Endothelial cell of umbilical vein (primary cell): ENCODE measurements at regions of chr15 and their contacts with region 1.

Region 1: GRCh38 chr15:77633134-77633912 is 611 bp upstream of the LINGO1 start:
- DNase-seq: peak; percentile 76
- H3K4me3 ChIP-seq: peak overlapping the region in 2 of 3 experiments; percentile 9 to 37
- H3K27ac ChIP-seq: no peak overlapping the region
- H3K4me1 ChIP-seq: peaks cover 3% of the 10 kb centered on the region
- H3K27me3 ChIP-seq: peaks cover 39 to 45% of the 10 kb centered on the region in 2 experiments
- CTCF ChIP-seq: peak; percentile 100
- POLR2A ChIP-seq: no peak

Region 2: DNA sequence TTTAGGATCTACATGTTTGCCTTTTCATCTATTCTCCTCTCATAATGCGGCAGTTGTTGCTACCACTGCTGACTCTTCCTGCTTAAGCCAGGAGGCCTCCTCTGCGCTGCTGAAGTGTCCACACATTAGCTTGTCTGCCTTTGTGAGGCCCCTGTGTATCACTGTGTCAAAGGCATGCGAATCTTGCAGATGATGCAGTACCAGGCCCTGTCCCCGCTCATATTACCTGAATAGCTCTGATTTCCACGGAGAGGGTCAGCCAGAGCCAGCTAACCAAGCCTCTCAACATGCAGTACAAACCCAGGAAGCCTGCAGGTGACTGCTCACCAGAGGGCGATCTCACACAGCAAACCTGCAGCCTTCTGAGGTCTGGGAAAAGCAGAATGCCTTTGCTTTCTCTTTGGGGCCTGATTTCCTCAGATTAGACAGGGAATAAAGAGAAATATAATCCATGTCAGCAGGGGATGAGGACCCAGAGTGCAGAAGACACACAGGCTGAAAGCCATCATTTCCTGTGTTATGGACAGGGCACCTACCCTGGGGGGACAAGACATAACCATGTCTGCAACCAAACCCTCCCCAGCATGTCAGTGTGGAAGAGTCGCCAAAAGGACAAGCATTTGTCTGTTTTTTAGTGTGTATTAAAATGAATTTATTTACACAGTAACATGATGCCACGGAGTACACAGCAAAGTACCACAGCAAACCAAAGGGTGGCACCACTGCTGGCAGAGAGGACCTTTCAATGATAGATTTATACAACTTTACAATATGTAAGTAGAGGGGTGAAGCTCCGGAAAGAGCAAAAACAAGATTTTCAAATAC is 525.6 kb before region 1 on chr15:
- CTCF ChIA-PET with region 1: interaction called, 8 read pairs
- POLR2A ChIA-PET with region 1: no interaction called
- dilution Hi-C with region 1: no loop called
- intact Hi-C with region 1: loop called (anchors 5 kb)
- DNase-seq: peak; percentile 53
- H3K4me3 ChIP-seq: no peak overlapping the region
- H3K27ac ChIP-seq: no peak overlapping the region
- H3K4me1 ChIP-seq: peaks cover 3% of the 10 kb centered on the region
- H3K27me3 ChIP-seq: no peaks in the 10 kb centered on the region
- CTCF ChIP-seq: peak; percentile 61 to 78
- POLR2A ChIP-seq: no peak

Region 3: GRCh38 chr15:77186594-77187011 is 446.7 kb before region 1 on chr15:
- CTCF ChIA-PET with region 1: interaction called, 15 read pairs
- POLR2A ChIA-PET with region 1: no interaction called
- dilution Hi-C with region 1: no loop called
- intact Hi-C with region 1: loop called (anchors 5 kb)
- DNase-seq: peak; percentile 66
- H3K4me3 ChIP-seq: no peak overlapping the region
- H3K27ac ChIP-seq: peak overlapping the region; percentile 92
- H3K4me1 ChIP-seq: peaks cover 33% of the 10 kb centered on the region
- H3K27me3 ChIP-seq: no peaks in the 10 kb centered on the region
- CTCF ChIP-seq: peak; percentile 30 to 56
- POLR2A ChIP-seq: no peak

Region 4: DNA sequence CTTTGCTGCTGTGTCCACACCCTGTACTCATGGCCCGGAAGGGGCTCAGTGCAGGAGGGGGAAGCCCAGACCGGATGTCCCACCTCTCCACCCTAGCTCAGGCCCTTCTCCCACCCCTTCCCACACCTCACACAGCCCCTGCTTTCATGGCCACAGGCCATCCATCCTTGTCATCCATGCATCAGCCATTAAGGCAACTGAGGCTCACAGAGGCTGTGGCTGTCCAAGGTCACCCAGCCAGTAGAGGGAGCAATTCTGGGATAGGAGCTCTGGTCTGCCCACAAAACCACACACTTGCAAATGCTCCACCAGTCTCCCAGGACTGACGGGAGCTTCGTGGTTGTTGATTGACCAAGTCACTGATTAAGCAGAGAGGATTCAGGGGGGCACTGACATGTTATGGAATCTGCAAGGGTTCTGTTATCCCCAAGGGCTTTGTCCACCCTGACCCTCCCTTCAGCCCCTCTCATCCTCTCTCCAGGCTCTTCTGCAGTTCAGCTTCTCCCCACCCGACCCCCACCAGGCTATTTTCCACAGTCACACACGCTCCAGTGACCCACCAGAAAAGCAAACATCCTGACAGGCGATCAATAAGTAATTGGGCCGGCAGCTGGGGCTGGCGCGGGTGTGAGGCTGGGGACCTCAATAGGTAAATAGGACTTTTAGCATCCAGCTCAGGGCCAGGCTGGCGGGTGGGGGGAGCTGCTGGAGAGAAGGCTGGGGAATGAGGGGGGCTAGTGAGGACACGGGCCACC is 15.7 kb before region 1 on chr15:
- CTCF ChIA-PET with region 1: interaction called, 43 read pairs
- POLR2A ChIA-PET with region 1: no interaction called
- dilution Hi-C with region 1: no loop called
- intact Hi-C with region 1: no loop called
- DNase-seq: no peak
- H3K4me3 ChIP-seq: no peak overlapping the region
- H3K27ac ChIP-seq: no peak overlapping the region
- H3K4me1 ChIP-seq: no peaks in the 10 kb centered on the region
- H3K27me3 ChIP-seq: no peaks in the 10 kb centered on the region
- CTCF ChIP-seq: peak; percentile 42 to 44
- POLR2A ChIP-seq: no peak

Region 5: GRCh38 chr15:77659350-77660321 is 26.3 kb after region 1 on chr15:
- CTCF ChIA-PET with region 1: interaction called, 16 read pairs
- POLR2A ChIA-PET with region 1: no interaction called
- dilution Hi-C with region 1: no loop called
- intact Hi-C with region 1: no loop called
- DNase-seq: peak; percentile 22
- H3K4me3 ChIP-seq: no peak overlapping the region
- H3K27ac ChIP-seq: no peak overlapping the region
- H3K4me1 ChIP-seq: no peaks in the 10 kb centered on the region
- H3K27me3 ChIP-seq: peaks cover 0 to 2% of the 10 kb centered on the region in 2 experiments
- CTCF ChIP-seq: peak; percentile 8 to 57
- POLR2A ChIP-seq: no peak

Region 6: GRCh38 chr15:77810130-77810571 is 176.8 kb after region 1 on chr15:
- CTCF ChIA-PET with region 1: no interaction called
- POLR2A ChIA-PET with region 1: no interaction called
- dilution Hi-C with region 1: no loop called
- intact Hi-C with region 1: no loop called
- DNase-seq: no peak
- H3K4me3 ChIP-seq: no peak overlapping the region
- H3K27ac ChIP-seq: no peak overlapping the region
- H3K4me1 ChIP-seq: no peaks in the 10 kb centered on the region
- H3K27me3 ChIP-seq: no peaks in the 10 kb centered on the region
- CTCF ChIP-seq: no peak
- POLR2A ChIP-seq: no peak

Region 7: DNA sequence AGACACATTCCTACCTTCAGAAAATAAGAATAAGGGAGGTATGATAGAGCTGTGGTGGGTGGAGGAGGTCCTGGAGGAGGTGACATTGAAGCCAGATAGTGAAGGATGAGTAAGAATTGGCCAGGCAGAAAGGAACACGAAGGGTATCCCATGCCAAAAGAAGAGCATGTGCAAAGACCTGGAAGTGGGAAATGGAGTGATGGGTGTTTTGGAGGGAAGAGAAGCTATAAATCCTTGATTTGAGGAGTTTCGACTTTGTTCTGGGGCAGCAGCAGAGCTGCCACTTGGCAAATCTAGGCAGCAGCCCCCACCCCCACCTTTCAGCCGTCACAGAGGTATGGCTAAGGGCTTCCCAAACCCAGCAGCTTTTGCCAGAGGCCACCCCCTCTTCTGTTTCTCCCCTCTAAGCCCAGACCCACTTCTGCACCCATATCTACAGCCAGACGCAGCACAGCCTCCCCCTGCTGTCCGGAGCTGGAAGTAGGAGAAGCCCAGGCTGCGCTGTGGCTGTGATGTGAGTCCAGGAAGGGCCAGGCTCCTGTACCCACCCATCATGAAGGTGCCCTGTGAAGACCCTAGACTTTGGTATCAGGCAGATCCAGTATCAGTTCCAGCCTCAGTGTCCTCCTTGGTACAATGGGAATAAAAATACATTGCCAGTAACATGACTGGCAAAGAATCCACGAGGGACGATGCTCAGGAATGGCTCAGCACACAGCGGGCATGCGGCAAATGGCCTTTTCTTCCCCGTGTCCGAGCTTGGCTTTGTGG is 188.1 kb after region 1 on chr15:
- CTCF ChIA-PET with region 1: interaction called, 116 read pairs
- POLR2A ChIA-PET with region 1: no interaction called
- dilution Hi-C with region 1: no loop called
- intact Hi-C with region 1: loop called (anchors 1 kb)
- DNase-seq: peak; percentile 55
- H3K4me3 ChIP-seq: no peak overlapping the region
- H3K27ac ChIP-seq: no peak overlapping the region
- H3K4me1 ChIP-seq: no peaks in the 10 kb centered on the region
- H3K27me3 ChIP-seq: peaks cover 37 to 42% of the 10 kb centered on the region in 2 experiments
- CTCF ChIP-seq: peak; percentile 59 to 88
- POLR2A ChIP-seq: no peak

Region 8: DNA sequence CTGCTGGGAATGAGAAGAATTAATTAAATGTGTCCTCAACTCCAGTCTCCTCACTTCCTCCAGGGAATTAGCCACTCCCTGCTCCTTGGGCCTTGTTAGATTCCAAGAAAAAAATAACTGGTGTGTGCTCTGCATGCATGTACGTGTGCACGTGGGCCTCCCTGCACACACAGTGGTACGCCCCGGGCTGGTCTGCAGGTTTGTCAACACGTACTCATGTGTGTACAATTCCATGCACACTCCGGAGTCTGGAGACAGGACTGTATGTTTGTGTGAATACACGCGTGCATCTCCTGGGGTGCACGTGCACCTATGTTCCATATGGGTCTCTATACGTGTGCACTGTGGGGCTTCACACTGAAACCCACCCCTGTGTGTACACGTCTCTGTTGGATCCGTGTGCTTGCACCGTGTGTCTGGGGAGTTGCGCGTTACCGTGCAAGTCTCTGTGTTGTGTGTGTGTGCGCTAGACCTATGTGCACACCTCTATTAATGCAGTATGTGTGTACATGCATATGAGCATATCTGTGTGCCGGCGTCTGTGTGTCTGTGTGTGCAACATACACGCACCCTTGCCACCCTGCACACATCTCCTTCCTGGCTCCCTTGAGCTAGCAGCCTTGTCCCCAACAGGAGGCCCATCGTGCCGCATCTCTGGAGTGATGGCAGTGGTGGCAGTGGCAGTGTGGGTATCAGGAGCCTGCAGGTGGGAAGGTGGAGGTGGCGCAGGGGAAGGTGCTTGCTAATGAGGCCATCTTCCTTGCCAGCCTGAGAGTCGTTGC is 234.1 kb after region 1 on chr15:
- CTCF ChIA-PET with region 1: no interaction called
- POLR2A ChIA-PET with region 1: no interaction called
- dilution Hi-C with region 1: no loop called
- intact Hi-C with region 1: no loop called
- DNase-seq: no peak
- H3K4me3 ChIP-seq: no peak overlapping the region
- H3K27ac ChIP-seq: no peak overlapping the region
- H3K4me1 ChIP-seq: peaks cover 4% of the 10 kb centered on the region
- H3K27me3 ChIP-seq: no peaks in the 10 kb centered on the region
- CTCF ChIP-seq: no peak
- POLR2A ChIP-seq: no peak